Activated CD4-positive, alpha-beta T cell treated with anti-CD3 and anti-CD28 coated beads for 36 hours (primary cell): ENCODE measurements at regions of chr3 and their contacts with region 1.

Region 1: DNA sequence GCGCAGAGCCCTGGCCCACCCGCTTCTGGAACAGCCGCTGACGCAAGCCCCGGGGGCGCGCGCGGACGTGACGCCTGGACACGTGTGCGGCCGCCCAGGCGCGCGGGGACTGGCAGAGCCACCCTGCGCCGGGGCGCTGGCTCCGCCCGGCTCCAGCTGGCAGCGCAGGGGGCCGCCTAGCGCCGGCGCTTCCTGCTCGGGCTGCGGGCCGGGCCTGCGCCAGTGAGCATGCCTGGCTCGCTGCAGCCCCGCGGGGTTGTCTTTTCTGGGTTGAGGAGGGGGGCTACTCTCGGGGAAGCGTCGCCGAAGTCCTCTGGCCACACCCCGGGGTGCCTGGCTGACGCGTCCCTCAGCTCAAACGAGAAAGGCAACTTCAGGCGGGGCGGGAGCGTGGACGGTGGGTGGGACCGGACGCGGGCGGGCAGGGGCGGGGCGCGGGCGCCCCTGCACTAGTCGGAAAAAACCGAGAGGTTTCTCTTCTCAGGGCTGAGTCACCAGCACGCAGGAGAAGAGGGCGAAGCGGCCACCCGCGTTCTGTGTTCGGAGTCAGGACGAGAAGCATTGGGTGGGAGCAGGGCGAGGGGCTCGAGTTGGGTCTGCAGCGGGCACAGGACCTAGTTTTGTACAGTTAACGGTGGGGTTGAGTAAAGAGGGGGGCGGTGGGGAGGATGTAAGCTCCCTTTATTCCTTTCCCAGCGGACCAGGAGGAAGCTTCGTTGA is at the start of gene SIAH2:
- DNase-seq: peak; percentile 96
- ATAC-seq: peak; percentile 72
- H3K4me3 Mint-ChIP-seq: peak within 1 kb of the TSS; percentile 85
- H3K27ac Mint-ChIP-seq: peak within 1 kb of the TSS; percentile 98
- H3K4me1 Mint-ChIP-seq: peaks cover 51% of the 10 kb centered on the region
- H3K27me3 Mint-ChIP-seq: no peaks in the 10 kb centered on the region
- total RNA-seq, gene SIAH2: 85.7 to 154 TPM

Region 2: DNA sequence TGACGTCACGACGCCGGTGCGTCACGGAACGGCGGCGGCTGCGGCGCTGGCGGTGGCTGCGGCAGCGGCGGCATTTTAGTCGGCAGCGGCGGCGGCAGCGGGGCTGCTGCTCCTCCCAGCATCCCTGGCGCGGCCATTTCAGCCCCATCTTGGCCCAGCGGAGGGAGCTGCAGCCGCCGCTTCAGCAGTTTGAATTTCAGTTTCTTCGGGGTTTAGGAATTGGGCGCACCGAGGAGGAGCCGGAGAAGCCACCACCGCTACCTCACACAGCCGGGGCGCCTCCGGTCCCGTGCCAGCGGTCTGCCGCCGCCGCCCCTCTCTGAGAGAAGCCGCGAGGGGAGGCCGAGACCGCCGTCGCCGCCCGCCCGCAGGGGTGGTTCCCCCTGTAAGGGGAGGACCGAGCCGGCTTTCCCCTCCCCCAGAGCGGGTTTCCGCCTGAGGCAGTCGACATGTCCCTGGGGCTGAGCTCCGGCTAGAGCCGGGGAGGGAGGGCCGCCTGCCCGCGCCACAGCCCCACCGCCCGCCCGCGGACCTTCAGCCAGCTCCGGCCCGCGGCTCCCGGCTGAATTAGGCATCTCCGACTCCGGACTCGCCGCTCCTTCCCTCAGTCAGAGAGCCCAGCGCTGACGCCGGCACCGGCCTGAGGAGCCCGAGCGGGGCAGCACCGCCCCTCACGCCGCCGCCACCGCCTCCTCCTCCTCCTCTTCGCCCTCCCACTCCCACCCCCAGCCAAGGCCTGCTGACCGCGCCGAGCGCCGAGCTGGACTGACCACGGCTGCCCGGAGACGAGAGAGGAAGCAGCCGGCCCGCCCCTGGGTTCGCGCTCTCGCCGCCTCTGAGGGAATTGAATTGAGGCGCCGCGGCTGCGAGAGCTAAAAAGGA is 354.8 kb before region 1 on chr3 and contains the start of gene TSC22D2:
- CTCF ChIA-PET with region 1: no interaction called
- POLR2A ChIA-PET with region 1: interaction called, 6 read pairs
- intact Hi-C with region 1: loop called (anchors 1 to 2 kb)
- DNase-seq: peak; percentile 96
- ATAC-seq: peak; percentile 73
- H3K4me3 Mint-ChIP-seq: peak within 1 kb of the TSS; percentile 77
- H3K27ac Mint-ChIP-seq: peak within 1 kb of the TSS; percentile 100
- H3K4me1 Mint-ChIP-seq: peaks cover 21% of the 10 kb centered on the region
- H3K27me3 Mint-ChIP-seq: no peaks in the 10 kb centered on the region
- total RNA-seq, gene TSC22D2: 12.0 to 20.2 TPM

Region 3: DNA sequence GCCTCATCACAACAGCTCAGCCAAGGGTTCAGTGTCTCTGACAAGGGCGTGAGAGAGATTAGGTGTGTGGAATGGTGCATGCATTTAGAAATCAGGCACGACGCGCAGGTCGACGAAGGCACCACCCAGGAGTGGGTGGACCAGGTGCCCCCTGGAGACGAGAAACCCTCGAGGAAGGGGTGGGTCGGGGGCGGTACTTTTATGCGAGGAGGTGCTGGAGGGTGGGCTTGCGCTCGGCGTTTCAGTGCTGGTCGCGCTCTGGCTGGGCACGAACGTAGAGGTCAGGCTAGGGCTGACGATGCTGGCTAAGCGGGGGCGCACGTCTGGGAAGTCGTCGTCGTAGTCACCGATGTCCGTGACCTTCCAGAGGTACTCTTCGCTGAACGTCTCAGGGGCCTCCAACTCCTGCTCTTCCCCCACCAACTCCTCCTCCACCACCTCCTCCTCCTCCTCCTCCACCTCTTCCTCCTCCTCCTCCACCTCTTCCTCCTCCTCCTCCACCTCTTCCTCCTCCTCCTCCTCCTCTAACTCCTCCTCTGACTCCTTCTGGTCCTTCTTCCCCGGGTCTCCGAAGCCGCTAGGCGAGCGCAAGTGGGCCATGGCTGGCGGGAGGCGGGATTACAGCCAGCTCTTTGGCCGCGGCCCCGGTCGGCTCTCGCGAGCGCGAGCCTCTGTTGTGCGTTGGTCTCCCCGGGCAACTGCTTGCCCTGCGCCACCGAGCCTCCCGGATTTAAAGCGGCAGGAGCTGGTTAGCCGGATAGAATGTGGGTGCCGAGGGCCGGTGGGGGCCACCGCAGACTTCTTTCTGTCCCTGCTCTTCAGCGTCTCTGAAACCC is 59.8 kb before region 1 on chr3 and contains the start of gene ERICH6:
- CTCF ChIA-PET with region 1: interaction called, 4 read pairs
- POLR2A ChIA-PET with region 1: interaction called, 11 read pairs
- intact Hi-C with region 1: loop called in 1 of 2 experiments (anchors 1 kb)
- DNase-seq: peak; percentile 93
- ATAC-seq: peak; percentile 96
- H3K4me3 Mint-ChIP-seq: peak within 1 kb of the TSS; percentile 87
- H3K27ac Mint-ChIP-seq: peak within 1 kb of the TSS; percentile 91
- H3K4me1 Mint-ChIP-seq: peaks cover 31% of the 10 kb centered on the region
- H3K27me3 Mint-ChIP-seq: no peaks in the 10 kb centered on the region
- total RNA-seq, gene ERICH6: 0.58 TPM in 1 of 2 experiments, not detected in the other

Region 4: GRCh38 chr3:150751753-150752263 is 11.5 kb before region 1 on chr3:
- CTCF ChIA-PET with region 1: interaction called, 4 read pairs
- POLR2A ChIA-PET with region 1: interaction called, 9 read pairs
- intact Hi-C with region 1: loop called in 1 of 2 experiments (anchors 1 kb)
- DNase-seq: no peak
- ATAC-seq: peak; percentile 6
- H3K4me3 Mint-ChIP-seq: no peak overlapping the region
- H3K27ac Mint-ChIP-seq: peak overlapping the region; percentile 76
- H3K4me1 Mint-ChIP-seq: peaks cover 85% of the 10 kb centered on the region
- H3K27me3 Mint-ChIP-seq: no peaks in the 10 kb centered on the region

Region 5: DNA sequence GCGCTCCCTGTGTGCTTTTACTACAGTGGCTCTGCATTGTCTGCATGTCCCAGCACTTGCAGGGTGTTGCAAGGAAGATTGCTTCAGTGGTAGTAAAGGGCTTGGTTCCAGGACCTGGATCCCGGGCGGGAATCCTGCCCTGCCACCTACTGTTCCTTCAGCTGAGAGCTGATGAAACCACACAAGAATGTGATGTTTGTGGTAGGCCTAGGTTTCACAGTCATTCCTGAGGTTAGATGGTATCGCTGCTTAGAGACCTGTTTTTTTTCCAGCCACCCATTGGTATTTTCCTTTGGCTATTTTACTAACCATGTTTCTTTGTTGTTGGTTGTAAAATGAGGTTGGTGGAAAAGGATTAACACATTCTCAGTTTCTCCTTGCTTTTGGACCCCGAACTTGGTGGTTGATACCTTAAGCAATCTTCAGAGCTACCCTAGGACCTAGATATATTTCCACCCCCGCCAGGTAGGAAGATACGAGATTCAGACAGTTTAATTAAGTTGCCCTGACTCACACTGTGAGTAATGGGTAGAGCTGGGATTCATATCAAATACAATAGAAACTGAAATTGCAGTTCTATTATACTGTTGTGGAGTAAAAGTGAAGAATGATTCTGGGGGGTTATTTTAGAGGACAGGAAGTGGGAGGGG is 541.9 kb after region 1 on chr3:
- CTCF ChIA-PET with region 1: no interaction called
- POLR2A ChIA-PET with region 1: no interaction called
- intact Hi-C with region 1: loop called in 1 of 2 experiments (anchors 1 kb)
- DNase-seq: peak; percentile 51
- ATAC-seq: peak; percentile 80
- H3K4me3 Mint-ChIP-seq: peak overlapping the region; percentile 40
- H3K27ac Mint-ChIP-seq: peak overlapping the region; percentile 69
- H3K4me1 Mint-ChIP-seq: peaks cover 78% of the 10 kb centered on the region
- H3K27me3 Mint-ChIP-seq: peaks cover 14% of the 10 kb centered on the region

Region 6: DNA sequence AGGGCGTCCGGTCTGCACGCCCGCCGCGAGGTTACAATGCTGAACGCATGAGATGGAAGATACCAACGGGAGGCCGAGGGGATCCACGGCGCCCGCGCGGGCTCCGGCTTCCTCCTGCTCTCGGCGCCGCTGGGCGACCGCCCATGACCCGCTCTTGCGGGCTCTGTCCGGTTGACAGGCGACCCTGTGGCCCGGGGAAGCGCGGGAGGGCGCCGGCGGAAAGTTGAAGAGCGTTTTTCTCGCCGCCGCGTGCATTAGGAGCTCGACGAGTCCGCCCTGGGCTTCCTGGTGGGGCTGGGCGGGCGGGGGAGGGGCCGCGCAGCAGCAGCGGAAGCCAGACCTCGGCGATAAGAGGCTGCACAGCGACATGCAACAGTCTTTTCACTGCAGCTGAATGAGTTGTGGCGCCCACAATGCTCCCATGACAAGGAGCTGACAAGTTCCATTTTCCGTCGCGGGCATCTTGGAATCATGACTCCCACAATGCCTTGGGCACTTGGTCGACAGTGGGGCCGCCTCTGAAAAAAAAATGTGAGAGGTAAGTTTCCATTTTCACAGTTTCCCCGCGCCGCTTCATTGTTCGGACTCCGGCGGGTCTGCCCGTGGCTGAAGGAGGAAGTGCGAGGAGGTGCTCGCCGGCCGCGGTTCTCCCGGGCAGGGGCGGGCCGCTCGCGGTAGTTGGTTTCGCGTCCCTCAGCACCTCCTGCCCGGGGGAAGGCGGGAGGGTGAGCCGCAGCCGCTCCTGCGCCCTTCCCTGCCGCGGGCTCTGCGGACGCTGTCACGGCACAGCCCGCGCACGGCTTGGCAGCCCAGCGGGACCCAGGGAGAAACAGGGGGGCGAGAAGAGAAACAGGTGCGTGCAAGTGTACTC is 1505.5 kb after region 1 on chr3 and contains the start of gene MBNL1:
- CTCF ChIA-PET with region 1: no interaction called
- POLR2A ChIA-PET with region 1: interaction called, 4 read pairs
- intact Hi-C with region 1: loop called in 1 of 2 experiments (anchors 5 kb)
- DNase-seq: peak; percentile 93
- ATAC-seq: peak; percentile 69
- H3K4me3 Mint-ChIP-seq: peak within 1 kb of the TSS; percentile 79
- H3K27ac Mint-ChIP-seq: peak within 1 kb of the TSS; percentile 99
- H3K4me1 Mint-ChIP-seq: peaks cover 49% of the 10 kb centered on the region
- H3K27me3 Mint-ChIP-seq: no peaks in the 10 kb centered on the region
- total RNA-seq, gene MBNL1: 317 to 481 TPM